Left lung (tissue), 14 donors: ENCODE measurements at regions of chr2 and their contacts with region 1.

Region 1: GRCh38 chr2:105369747-105370690 is 28.8 kb downstream of the FHL2 start:
- DNase-seq: peak; percentile 71 to 91 (median 84)
- ATAC-seq: peak; percentile 98
- H3K4me3 ChIP-seq: no peak overlapping the region
- H3K27ac ChIP-seq: no peak overlapping the region
- H3K4me1 ChIP-seq: peaks cover 7 to 10% of the 10 kb centered on the region in 2 donors
- H3K27me3 ChIP-seq: no peaks in the 10 kb centered on the region
- CTCF ChIP-seq: peak; percentile 83 to 92

Region 2: GRCh38 chr2:105521205-105521604 is 151.2 kb after region 1 on chr2:
- intact Hi-C with region 1: loop called in 1 of 2 experiments (anchors 2 kb)
- DNase-seq: peak in 1 of 4 donors; percentile 10
- ATAC-seq: no peak
- H3K4me3 ChIP-seq: no peak overlapping the region
- H3K27ac ChIP-seq: no peak overlapping the region
- H3K4me1 ChIP-seq: no peaks in the 10 kb centered on the region
- H3K27me3 ChIP-seq: peaks cover 0 to 5% of the 10 kb centered on the region in 2 donors
- CTCF ChIP-seq: peak; percentile 45 to 51